Activated B cell treated with CpG ODN at 0.5 μM for 24 hours (primary cell): ENCODE measurements at regions of chr11 and their contacts with region 1.

Region 1: DNA sequence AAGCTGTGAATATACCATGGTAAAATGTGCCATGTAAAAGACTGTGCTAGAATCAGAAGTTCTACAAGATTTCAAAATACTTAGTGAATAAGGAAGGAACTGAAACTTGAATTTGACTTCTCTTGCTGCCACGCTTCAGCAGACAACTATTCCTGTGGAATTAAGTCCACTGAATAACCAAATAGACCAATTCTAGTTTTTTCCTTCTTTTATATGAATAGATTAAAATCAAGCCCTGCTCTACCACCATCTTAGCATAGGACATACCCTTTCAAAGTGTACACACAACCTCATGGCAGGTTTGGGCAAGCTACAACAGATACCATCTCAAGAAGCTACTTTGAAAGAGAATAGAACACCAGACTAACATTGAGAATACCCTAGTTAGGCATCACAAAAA is 23.4 kb upstream of the CLNS1A start:
- DNase-seq: no peak
- ATAC-seq: no peak
- H3K4me3 Mint-ChIP-seq: peak overlapping the region; percentile 55
- H3K27ac Mint-ChIP-seq: peak overlapping the region; percentile 30
- H3K4me1 Mint-ChIP-seq: peaks cover 30% of the 10 kb centered on the region
- H3K27me3 Mint-ChIP-seq: no peaks in the 10 kb centered on the region
- CTCF ChIP-seq: no peak

Region 2: DNA sequence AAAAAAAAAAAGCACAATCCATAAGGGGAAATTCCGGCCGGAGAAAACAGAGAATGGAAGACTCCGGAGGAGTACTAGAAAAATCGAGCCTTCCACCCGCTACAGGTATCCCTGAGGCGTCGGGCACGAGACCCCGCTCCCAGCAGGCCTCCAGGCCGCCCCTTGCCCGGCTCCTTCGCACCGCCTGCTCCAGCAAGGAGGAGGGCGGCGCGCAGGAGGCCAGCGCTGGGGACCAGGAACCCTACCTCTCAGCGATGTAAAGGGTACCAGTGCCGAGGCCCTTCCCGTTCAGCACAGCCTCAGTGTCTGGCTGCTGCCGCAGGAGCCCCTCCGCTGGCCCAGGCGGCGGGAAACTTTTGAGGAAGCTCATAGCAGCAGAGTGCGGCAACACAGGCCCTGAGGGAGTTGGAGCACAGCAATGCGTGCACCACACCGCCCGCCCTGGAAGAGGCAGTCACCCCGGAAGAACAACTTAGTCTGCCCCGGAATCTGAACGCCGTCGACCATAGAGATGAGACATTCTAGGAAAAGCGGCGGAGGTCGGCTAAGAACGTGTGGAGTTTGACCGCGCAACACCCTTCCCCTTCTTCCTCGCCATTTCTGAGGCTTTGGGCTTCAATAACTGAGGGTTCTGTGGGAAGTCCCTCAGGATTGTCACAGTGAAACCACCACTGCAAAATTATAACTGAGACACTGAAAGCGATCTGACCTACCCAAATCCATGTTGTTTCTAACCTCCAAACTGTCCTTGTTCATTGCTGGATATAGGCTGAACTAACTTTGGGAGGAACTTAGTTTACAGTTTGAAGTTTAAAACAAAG is 23.4 kb before region 1 on chr11 and contains the start of gene CLNS1A:
- CTCF ChIA-PET with region 1: no interaction called
- POLR2A ChIA-PET with region 1: interaction called, 4 read pairs
- intact Hi-C with region 1: loop called (anchors 1 kb)
- DNase-seq: peak; percentile 70
- ATAC-seq: peak; percentile 99
- H3K4me3 Mint-ChIP-seq: peak within 1 kb of the TSS; percentile 96
- H3K27ac Mint-ChIP-seq: peak within 1 kb of the TSS; percentile 94
- H3K4me1 Mint-ChIP-seq: peaks cover 41% of the 10 kb centered on the region
- H3K27me3 Mint-ChIP-seq: no peaks in the 10 kb centered on the region
- CTCF ChIP-seq: no peak
- total RNA-seq, gene CLNS1A: 112 and 116 TPM in 2 replicates

Region 3: GRCh38 chr11:77695417-77695816 is 34.5 kb after region 1 on chr11:
- CTCF ChIA-PET with region 1: no interaction called
- POLR2A ChIA-PET with region 1: no interaction called
- intact Hi-C with region 1: no loop called
- DNase-seq: no peak
- ATAC-seq: no peak
- H3K4me3 Mint-ChIP-seq: no peak overlapping the region
- H3K27ac Mint-ChIP-seq: no peak overlapping the region
- H3K4me1 Mint-ChIP-seq: no peaks in the 10 kb centered on the region
- H3K27me3 Mint-ChIP-seq: no peaks in the 10 kb centered on the region
- CTCF ChIP-seq: no peak

Region 4: GRCh38 chr11:77710358-77710757 is 49.4 kb after region 1 on chr11:
- CTCF ChIA-PET with region 1: no interaction called
- POLR2A ChIA-PET with region 1: no interaction called
- intact Hi-C with region 1: no loop called
- DNase-seq: no peak
- ATAC-seq: no peak
- H3K4me3 Mint-ChIP-seq: no peak overlapping the region
- H3K27ac Mint-ChIP-seq: no peak overlapping the region
- H3K4me1 Mint-ChIP-seq: peaks cover 16% of the 10 kb centered on the region
- H3K27me3 Mint-ChIP-seq: no peaks in the 10 kb centered on the region
- CTCF ChIP-seq: no peak

Region 5: GRCh38 chr11:78365381-78365792 is 704.4 kb after region 1 on chr11:
- CTCF ChIA-PET with region 1: no interaction called
- POLR2A ChIA-PET with region 1: no interaction called
- intact Hi-C with region 1: no loop called
- DNase-seq: no peak
- ATAC-seq: no peak
- H3K4me3 Mint-ChIP-seq: no peak overlapping the region
- H3K27ac Mint-ChIP-seq: no peak overlapping the region
- H3K4me1 Mint-ChIP-seq: peaks cover 14% of the 10 kb centered on the region
- H3K27me3 Mint-ChIP-seq: no peaks in the 10 kb centered on the region
- CTCF ChIP-seq: no peak